Heart left ventricle (tissue), 16 donors: ENCODE measurements at regions of chr3 and their contacts with region 1.

Region 1: GRCh38 chr3:25427942-25428788 is at the start of gene RARB:
- DNase-seq: peak; percentile 72 to 85 (median 81)
- ATAC-seq: peak; percentile 85 to 95 (median 92)
- H3K4me3 ChIP-seq: peak within 1 kb of the TSS; percentile 55 to 78 (median 62)
- H3K27ac ChIP-seq: peak within 1 kb of the TSS; percentile 86 to 98 (median 93)
- H3K4me1 ChIP-seq: peaks cover 0 to 27% (median 13%) of the 10 kb centered on the region in 12 donors
- H3K27me3 ChIP-seq: peaks cover 0 to 9% (median 0%) of the 10 kb centered on the region in 9 donors
- CTCF ChIP-seq: no peak
- POLR2A ChIP-seq: peak; percentile 55 to 96
- total RNA-seq, gene RARB: 11.3 to 21.0 (median 17.3) TPM

Region 2: DNA sequence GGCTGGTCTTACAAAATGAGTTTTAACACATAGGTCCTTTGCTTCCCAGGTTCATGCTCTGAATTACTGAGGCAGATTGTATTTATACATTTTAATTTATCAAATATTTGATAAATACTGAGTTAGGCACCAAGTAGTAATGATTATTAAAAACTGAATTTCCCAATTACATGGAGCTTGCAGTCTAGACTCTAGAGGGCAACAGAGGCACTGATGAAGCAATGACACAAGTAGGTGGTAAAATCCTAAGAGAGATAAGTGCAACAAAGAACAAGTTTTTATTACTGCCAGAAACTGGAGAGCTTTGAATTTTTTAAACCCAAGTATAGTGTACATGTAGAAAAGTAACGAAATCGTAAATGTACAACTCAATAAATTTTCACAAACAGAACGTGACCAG is 406.3 kb before region 1 on chr3:
- intact Hi-C with region 1: loop called in 1 of 10 experiments (anchors 10 kb)
- DNase-seq: no peak
- ATAC-seq: peak in 1 of 4 donors; percentile 61
- H3K4me3 ChIP-seq: no peak overlapping the region
- H3K27ac ChIP-seq: no peak overlapping the region
- H3K4me1 ChIP-seq: no peaks in the 10 kb centered on the region
- H3K27me3 ChIP-seq: no peaks in the 10 kb centered on the region
- CTCF ChIP-seq: peak; percentile 33 to 69 (median 60)
- POLR2A ChIP-seq: no peak

Region 3: GRCh38 chr3:25044762-25045710 is 383.1 kb before region 1 on chr3:
- intact Hi-C with region 1: loop called in 4 of 10 experiments (anchors 2 to 10 kb)
- DNase-seq: peak in 3 of 5 donors; percentile 30 to 39 (median 31)
- ATAC-seq: peak; percentile 86 to 91 (median 88)
- H3K4me3 ChIP-seq: no peak overlapping the region
- H3K27ac ChIP-seq: peak overlapping the region in 10 of 12 donors; percentile 6 to 59 (median 21)
- H3K4me1 ChIP-seq: peaks cover 0 to 57% (median 22%) of the 10 kb centered on the region in 12 donors
- H3K27me3 ChIP-seq: no peaks in the 10 kb centered on the region
- CTCF ChIP-seq: no peak
- POLR2A ChIP-seq: no peak

Region 4: GRCh38 chr3:25156626-25157025 is 271.5 kb before region 1 on chr3:
- intact Hi-C with region 1: loop called in 1 of 10 experiments (anchors 10 kb)
- DNase-seq: no peak
- ATAC-seq: peak; percentile 86 to 99 (median 91)
- H3K4me3 ChIP-seq: peak overlapping the region in 1 of 12 donors; percentile 24
- H3K27ac ChIP-seq: peak overlapping the region in 3 of 12 donors; percentile 27 to 42 (median 40)
- H3K4me1 ChIP-seq: peaks cover 0 to 14% (median 0%) of the 10 kb centered on the region in 12 donors
- H3K27me3 ChIP-seq: no peaks in the 10 kb centered on the region
- CTCF ChIP-seq: no peak
- POLR2A ChIP-seq: no peak

Region 5: DNA sequence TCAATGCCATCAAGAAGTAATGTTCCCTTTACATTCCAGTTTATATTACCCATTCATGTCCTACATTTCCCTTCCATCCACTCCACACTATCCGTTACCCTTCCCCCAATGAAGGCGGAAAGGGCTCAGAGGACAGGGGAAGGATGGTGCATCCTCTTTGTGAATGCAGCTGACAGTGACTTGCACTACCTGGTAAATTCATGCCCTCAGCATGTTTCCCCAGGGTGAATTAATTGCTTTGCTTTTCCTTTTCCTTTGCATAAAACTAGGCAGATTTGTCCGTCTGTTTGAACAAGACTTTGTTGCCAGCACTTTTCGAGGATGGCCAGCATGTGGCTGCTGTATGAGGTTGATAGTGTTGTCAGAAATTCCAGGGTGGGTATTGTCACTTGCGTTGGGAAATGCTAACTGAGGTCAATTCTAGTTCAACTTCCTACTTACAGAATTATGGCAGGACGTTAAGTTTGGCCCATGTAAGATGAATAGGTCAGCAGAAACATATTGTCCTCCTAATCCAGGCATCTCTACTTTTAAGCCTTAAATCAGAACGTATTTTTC is 79.1 kb before region 1 on chr3:
- intact Hi-C with region 1: no loop called
- DNase-seq: no peak
- ATAC-seq: no peak
- H3K4me3 ChIP-seq: no peak overlapping the region
- H3K27ac ChIP-seq: no peak overlapping the region
- H3K4me1 ChIP-seq: peaks cover 0 to 3% (median 0%) of the 10 kb centered on the region in 12 donors
- H3K27me3 ChIP-seq: no peaks in the 10 kb centered on the region
- CTCF ChIP-seq: no peak
- POLR2A ChIP-seq: no peak

Region 6: GRCh38 chr3:25448750-25449692 is 20.9 kb after region 1 on chr3:
- intact Hi-C with region 1: loop called in 2 of 10 experiments (anchors 2 kb)
- DNase-seq: peak; percentile 88 to 96 (median 94)
- ATAC-seq: peak; percentile 94 to 96 (median 95)
- H3K4me3 ChIP-seq: no peak overlapping the region
- H3K27ac ChIP-seq: peak overlapping the region; percentile 38 to 73 (median 62)
- H3K4me1 ChIP-seq: peaks cover 0 to 63% (median 24%) of the 10 kb centered on the region in 12 donors
- H3K27me3 ChIP-seq: no peaks in the 10 kb centered on the region
- CTCF ChIP-seq: no peak
- POLR2A ChIP-seq: no peak

Region 7: GRCh38 chr3:25468866-25469319 is 40.7 kb after region 1 on chr3:
- intact Hi-C with region 1: loop called in 4 of 10 experiments (anchors 5 kb)
- DNase-seq: peak; percentile 72 to 86 (median 81)
- ATAC-seq: peak; percentile 80 to 90 (median 86)
- H3K4me3 ChIP-seq: no peak overlapping the region
- H3K27ac ChIP-seq: peak overlapping the region in 8 of 12 donors; percentile 70 to 92 (median 80)
- H3K4me1 ChIP-seq: peaks cover 10 to 71% (median 51%) of the 10 kb centered on the region in 12 donors
- H3K27me3 ChIP-seq: no peaks in the 10 kb centered on the region
- CTCF ChIP-seq: peak in 11 of 12 donors; percentile 7 to 55 (median 33)
- POLR2A ChIP-seq: no peak